ENCODE measurements at regions of chr12 and their contacts with region 1.

Region 1: GRCh38 chr12:6937481-6938297 is 5.9 kb upstream of the RNU7-1 start:
- H3K4me3 Mint-ChIP-seq: peak overlapping the region; percentile 79
- H3K27ac Mint-ChIP-seq: peak overlapping the region; percentile 87
- H3K4me1 Mint-ChIP-seq: peaks cover 64% of the 10 kb centered on the region
- H3K27me3 Mint-ChIP-seq: peaks cover 2% of the 10 kb centered on the region

Region 2: DNA sequence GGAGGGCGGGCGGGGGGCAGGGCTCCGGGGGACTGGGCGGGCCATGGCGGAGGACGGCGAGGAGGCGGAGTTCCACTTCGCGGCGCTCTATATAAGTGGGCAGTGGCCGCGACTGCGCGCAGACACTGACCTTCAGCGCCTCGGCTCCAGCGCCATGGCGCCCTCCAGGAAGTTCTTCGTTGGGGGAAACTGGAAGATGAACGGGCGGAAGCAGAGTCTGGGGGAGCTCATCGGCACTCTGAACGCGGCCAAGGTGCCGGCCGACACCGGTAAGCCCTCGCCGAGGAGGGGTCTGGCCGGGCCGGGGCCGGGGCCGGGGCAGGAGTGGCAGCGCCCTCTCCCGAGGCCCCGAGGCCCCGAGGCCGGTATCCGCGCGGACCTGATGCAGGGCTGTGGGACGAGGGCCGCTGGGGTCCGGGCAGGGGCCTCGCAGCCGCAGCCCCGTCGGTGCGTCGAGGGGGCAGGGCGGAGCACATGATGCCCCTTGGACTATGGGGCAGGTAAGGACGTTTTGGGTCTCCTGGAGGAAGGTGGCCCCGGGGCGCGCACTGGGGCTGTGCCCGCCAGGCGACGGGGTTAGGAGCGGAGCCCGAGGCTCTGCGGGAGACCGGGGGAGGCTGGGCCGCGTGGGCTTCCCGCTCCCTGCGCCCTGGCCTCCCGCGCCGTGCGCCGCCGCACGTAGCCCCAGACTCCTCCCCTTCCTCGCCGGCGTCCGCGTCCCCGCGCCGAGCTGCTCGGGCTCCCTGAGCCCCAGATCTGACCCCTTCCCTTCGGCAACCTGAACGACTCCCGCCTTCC is 70.1 kb before region 1 on chr12 and contains the start of gene TPI1:
- intact Hi-C with region 1: loop called (anchors 5 kb)
- H3K4me3 Mint-ChIP-seq: peak within 1 kb of the TSS; percentile 94
- H3K27ac Mint-ChIP-seq: peak within 1 kb of the TSS; percentile 94
- H3K4me1 Mint-ChIP-seq: peaks cover 57% of the 10 kb centered on the region
- H3K27me3 Mint-ChIP-seq: no peaks in the 10 kb centered on the region

Region 3: DNA sequence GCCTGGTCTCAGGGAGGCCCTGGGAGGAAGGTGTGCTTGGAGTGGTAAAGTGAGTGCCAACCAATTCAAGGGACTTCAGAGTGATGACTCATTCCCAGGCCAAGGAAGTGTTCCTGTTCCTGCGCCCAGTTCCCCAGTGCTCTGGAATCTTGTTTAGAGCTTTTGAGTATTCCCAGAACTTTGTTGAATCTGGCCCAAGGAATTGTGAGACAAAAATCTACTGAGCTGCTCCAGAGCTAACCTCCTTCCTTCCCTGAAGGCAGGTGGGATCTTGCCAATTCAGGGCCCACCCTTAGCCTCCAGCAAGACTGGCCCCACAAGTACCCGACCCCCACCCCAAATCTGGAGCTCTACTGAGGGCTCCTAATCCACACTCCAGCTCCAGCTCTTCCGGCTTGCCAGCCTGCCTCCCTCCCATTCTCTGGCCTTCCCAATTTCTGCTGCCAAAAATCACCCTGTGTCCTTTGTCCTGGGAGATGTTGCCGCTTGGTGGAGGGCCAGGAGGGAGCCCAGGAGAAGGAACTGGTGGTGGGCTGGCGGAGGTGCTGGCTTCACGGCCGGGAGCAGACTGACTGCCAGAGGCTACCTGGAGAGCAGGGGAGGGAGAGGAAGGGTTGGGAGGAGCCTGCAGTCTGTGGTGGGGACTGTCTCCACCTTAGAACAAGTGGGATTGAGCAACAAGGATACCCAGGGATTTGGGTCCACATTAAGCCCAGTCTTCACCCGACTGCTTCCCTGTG is 12.0 kb before region 1 on chr12:
- intact Hi-C with region 1: loop called (anchors 2 kb)
- H3K4me3 Mint-ChIP-seq: no peak overlapping the region
- H3K27ac Mint-ChIP-seq: peak overlapping the region; percentile 20
- H3K4me1 Mint-ChIP-seq: peaks cover 85% of the 10 kb centered on the region
- H3K27me3 Mint-ChIP-seq: peaks cover 51% of the 10 kb centered on the region

Region 4: DNA sequence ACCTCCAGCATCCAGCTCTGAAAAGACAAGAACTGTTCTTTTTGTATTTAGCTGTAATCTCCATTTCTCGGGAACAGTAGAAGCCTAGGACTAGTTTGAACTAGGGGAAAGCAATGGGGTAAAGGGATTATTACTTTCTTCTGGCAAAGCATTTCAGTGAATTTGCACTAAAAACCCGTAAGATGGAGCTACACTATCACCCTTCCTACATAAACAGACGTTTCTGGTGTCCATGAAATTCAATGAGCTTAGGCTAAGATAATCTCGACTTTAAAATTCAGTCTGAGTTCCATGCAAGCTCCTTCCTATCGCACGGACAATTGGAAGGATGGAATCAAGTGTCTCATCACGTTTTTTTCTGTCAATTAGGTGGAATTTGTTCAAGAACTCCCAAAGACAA is 390.2 kb after region 1 on chr12:
- intact Hi-C with region 1: no loop called
- H3K4me3 Mint-ChIP-seq: no peak overlapping the region
- H3K27ac Mint-ChIP-seq: no peak overlapping the region
- H3K4me1 Mint-ChIP-seq: no peaks in the 10 kb centered on the region
- H3K27me3 Mint-ChIP-seq: peaks cover 6% of the 10 kb centered on the region

Measured in dendritic cell treated with granulocyte-macrophage colony-stimulating factor and Interleukin-4, amounts not matched to agents 40 ng/mL and 50 ng/mL, for 4 days (primary cell).